ENCODE measurements at regions of chr12 and their contacts with region 1.

Region 1: DNA sequence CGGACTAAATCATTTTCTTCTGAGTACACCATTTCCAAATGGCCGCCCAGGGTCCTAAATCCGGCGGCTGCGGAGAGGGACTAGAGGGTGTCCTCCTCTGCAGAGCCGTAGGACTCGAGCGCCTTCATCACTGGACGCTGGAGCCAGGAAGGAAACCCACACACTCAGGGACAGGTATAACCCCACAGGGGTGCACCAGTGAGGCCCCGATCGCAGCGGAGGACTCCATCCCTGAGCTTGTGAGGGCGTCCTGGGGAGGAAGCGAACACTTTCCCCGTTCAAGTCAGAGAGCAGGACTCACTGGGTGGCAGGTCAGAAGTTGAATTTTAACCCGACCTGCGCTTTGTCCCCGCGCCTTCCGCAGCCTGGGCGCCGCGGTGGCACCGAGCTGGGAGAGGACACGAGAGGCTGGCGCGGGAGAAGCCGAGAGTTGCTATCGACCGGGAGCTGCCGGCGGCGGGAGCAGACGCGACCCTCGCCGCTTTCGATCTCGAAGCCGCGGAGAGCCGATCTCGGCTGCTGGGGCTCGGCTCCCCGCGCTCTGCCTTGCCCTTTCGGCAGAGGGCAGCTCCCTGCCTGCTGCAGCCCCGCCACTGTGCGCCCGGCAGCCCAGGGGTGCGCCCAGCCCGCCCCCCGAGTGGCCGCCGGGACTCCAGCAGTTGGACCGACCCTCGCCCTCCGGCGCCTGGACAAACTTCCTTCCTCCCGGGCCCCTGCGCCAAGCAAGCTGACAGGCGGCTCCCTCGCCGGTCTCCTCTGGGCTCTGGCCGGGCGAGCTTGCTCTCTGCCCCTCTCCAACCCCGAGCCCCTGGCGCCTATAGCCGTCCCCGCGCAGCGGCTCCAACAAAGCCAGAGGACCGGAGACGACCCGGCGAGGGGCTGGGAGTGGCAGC is 990 bp downstream of the LIN7A start:
- DNase-seq: peak; percentile 39
- H3K4me3 ChIP-seq: peak overlapping the region; percentile 53 to 55
- H3K27ac ChIP-seq: peak overlapping the region; percentile 58 to 72
- H3K4me1 ChIP-seq: no peaks in the 10 kb centered on the region
- H3K27me3 ChIP-seq: no peaks in the 10 kb centered on the region
- CTCF ChIP-seq: no peak
- POLR2A ChIP-seq: no peak

Region 2: DNA sequence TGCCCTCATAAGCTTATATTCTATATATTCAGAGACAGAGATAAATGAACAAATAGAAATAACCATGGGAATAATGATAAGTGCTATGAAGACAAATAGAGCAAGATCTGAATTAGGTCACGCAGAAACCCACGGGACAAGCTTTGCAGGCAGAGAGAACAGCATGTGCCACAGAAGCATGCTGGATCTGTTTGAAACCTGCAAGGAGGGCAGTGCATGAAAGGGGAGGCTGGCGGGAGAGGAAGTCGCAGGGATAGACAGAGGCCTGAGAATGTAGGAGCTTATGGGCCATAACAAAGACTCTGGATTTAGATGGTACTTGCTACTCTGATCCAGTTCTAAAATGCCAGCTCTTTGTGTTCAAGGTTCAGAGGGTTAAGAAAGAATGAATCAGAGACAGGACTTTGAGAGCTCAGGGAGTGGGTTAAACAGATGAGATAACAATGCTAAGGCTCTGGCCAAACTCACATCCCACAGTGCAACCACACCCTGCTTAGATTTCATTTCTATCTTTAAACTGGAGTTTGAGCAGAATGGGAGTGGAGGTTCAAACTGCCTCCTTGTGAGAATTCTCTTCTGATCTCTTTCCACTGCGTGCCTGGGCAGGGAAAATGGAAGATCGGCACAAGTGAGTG is 952.6 kb before region 1 on chr12:
- intact Hi-C with region 1: no loop called
- DNase-seq: no peak
- H3K4me3 ChIP-seq: no peak overlapping the region
- H3K27ac ChIP-seq: no peak overlapping the region
- H3K4me1 ChIP-seq: no peaks in the 10 kb centered on the region
- H3K27me3 ChIP-seq: no peaks in the 10 kb centered on the region
- CTCF ChIP-seq: no peak
- POLR2A ChIP-seq: no peak

Region 3: DNA sequence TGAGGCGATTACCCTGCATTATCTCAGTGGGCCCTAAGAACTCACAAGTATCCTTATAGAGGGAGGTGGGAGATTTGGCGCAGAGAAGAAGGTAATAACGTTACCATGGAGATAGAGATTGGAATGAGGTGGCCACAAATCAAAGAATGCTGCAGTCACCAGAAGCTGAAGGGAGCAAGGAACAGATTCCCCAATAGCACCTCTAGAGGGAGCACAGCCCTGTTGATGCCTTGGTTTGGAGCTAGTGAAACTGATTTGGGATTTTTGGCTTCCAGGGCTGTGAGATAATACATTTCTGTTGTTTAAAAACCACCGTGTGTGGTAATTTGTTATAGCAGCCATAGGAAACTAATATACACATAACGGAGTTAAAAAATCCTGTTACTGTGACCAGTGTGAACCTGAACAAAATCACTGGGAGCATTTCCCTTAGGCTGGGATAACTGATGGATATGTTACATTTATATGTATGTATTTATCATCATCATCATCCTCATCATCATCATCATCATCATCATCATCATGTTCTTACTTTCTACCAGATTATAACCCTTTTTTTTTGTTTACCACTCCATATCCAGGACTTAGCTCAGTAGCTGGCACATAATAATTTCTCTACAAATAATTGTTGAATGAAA is 99.3 kb before region 1 on chr12:
- intact Hi-C with region 1: loop called (anchors 5 kb)
- DNase-seq: peak; percentile 6
- H3K4me3 ChIP-seq: no peak overlapping the region
- H3K27ac ChIP-seq: no peak overlapping the region
- H3K4me1 ChIP-seq: no peaks in the 10 kb centered on the region
- H3K27me3 ChIP-seq: no peaks in the 10 kb centered on the region
- CTCF ChIP-seq: peak in 3 of 4 experiments; percentile 47 to 60 (median 56)
- POLR2A ChIP-seq: no peak

Region 4: GRCh38 chr12:81010641-81011040 is 73.9 kb after region 1 on chr12:
- intact Hi-C with region 1: no loop called
- DNase-seq: no peak
- H3K4me3 ChIP-seq: no peak overlapping the region
- H3K27ac ChIP-seq: no peak overlapping the region
- H3K4me1 ChIP-seq: no peaks in the 10 kb centered on the region
- H3K27me3 ChIP-seq: no peaks in the 10 kb centered on the region
- CTCF ChIP-seq: no peak
- POLR2A ChIP-seq: no peak

Region 5: DNA sequence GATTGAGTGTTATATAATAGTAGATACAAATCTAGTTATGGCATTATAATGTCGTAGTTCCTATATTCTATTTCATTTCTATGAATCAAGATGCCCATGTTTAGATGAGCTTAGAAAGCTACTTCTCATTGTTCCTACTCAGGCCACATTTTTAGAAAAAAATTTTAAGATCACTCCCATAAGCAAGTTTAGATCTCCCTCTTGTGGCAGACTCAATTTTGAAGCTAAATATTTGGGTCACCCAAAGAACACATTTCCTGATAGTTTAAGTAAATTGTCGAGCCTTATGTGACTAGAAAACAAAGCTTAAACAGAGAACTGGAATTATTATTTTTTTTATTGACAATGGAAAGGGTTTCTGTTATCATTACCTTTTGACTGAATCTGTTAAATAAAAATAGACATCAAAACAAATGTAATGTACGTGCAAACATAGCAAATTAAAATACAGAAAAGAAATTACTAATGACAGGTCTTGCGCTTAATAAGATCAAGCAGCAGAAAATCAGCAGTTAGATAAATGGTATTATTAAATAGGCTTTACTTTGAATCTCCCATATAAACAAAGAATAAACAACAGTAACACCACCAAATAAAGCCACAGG is 321.3 kb after region 1 on chr12:
- intact Hi-C with region 1: loop called (anchors 10 kb)
- DNase-seq: no peak
- H3K4me3 ChIP-seq: no peak overlapping the region
- H3K27ac ChIP-seq: no peak overlapping the region
- H3K4me1 ChIP-seq: no peaks in the 10 kb centered on the region
- H3K27me3 ChIP-seq: no peaks in the 10 kb centered on the region
- CTCF ChIP-seq: peak in 3 of 4 experiments; percentile 67 to 71 (median 69)
- POLR2A ChIP-seq: no peak

Measured in prostate gland (tissue), 2 donors.